H1 (cell line): ENCODE measurements at regions of chr12 and their contacts with region 1.

Region 1: GRCh38 chr12:51341259-51342007 is 5.0 kb downstream of the CELA1 start:
- DNase-seq: peak in 1 of 2 experiments; percentile 79
- H3K4me3 ChIP-seq: peak overlapping the region in 1 of 4 experiments; percentile 37; a peak in 2 of 8 replicates
- H3K27ac ChIP-seq: no peak overlapping the region
- H3K4me1 ChIP-seq: peaks cover 0 to 3% (median 2%) of the 10 kb centered on the region in 4 experiments; a peak in 3 of 7 replicates
- H3K27me3 ChIP-seq: no peaks in the 10 kb centered on the region
- CTCF ChIP-seq: peak; percentile 58 to 99 (median 88)
- EP300 ChIP-seq: no peak
- POLR2A ChIP-seq: no peak
- RAD21 ChIP-seq: peak; percentile 98

Region 2: GRCh38 chr12:51253276-51253675 is 88.2 kb before region 1 on chr12:
- CTCF ChIA-PET with region 1: interaction called, 28 read pairs
- POLR2A ChIA-PET with region 1: interaction called, 5 read pairs
- DNase-seq: no peak
- H3K4me3 ChIP-seq: no peak overlapping the region
- H3K27ac ChIP-seq: no peak overlapping the region
- H3K4me1 ChIP-seq: peaks cover 0 to 5% (median 0%) of the 10 kb centered on the region in 4 experiments; a peak in 1 of 7 replicates
- H3K27me3 ChIP-seq: no peaks in the 10 kb centered on the region
- CTCF ChIP-seq: no peak
- EP300 ChIP-seq: no peak
- POLR2A ChIP-seq: no peak
- RAD21 ChIP-seq: no peak

Region 3: GRCh38 chr12:51270067-51270970 is 71.1 kb before region 1 on chr12 and contains the start of gene SMAGP:
- CTCF ChIA-PET with region 1: interaction called, 111 read pairs
- POLR2A ChIA-PET with region 1: interaction called, 10 read pairs
- DNase-seq: peak in 1 of 2 experiments; percentile 89
- H3K4me3 ChIP-seq: peak within 1 kb of the TSS; percentile 42 to 84 (median 62)
- H3K27ac ChIP-seq: no peak within 1 kb of the TSS; the same call in 1 of the 2 replicates
- H3K4me1 ChIP-seq: peaks cover 0 to 6% (median 2%) of the 10 kb centered on the region in 4 experiments; a peak in 5 of 7 replicates
- H3K27me3 ChIP-seq: peaks cover 0 to 11% (median 8%) of the 10 kb centered on the region in 4 experiments; a peak in 6 of 7 replicates
- CTCF ChIP-seq: no peak
- EP300 ChIP-seq: 0 out of 3 replicates have a peak, but pooled peaks of 1 of the 2 experiments have one; percentile 13
- POLR2A ChIP-seq: peak; percentile 43 to 63
- RAD21 ChIP-seq: no peak; a peak in 2 of 4 replicates
- total RNA-seq, gene SMAGP: 9.2 and 9.4 TPM in 2 replicates

Region 4: DNA sequence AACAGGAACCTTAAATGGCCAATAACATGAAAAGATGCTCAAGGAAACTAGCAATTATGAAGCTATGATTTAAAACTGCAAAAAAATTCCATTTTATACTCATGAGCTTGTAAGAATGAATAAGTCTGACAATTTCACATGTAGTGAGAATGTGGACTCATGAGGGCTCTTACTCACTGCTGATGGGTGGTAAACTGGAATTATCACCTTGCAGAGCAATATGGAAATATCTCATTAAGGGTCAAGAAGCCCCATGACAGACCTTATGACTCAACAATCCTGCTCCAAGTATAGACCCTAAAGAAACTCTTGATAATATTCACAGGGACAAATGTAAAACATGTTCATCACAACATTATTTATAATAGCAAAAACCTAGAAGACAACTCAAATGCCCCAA is 47.7 kb before region 1 on chr12:
- CTCF ChIA-PET with region 1: interaction called, 33 read pairs
- POLR2A ChIA-PET with region 1: interaction called, 3 read pairs
- DNase-seq: no peak
- H3K4me3 ChIP-seq: no peak overlapping the region
- H3K27ac ChIP-seq: no peak overlapping the region
- H3K4me1 ChIP-seq: no peaks in the 10 kb centered on the region
- H3K27me3 ChIP-seq: no peaks in the 10 kb centered on the region
- CTCF ChIP-seq: no peak
- EP300 ChIP-seq: no peak
- POLR2A ChIP-seq: no peak
- RAD21 ChIP-seq: no peak

Region 5: DNA sequence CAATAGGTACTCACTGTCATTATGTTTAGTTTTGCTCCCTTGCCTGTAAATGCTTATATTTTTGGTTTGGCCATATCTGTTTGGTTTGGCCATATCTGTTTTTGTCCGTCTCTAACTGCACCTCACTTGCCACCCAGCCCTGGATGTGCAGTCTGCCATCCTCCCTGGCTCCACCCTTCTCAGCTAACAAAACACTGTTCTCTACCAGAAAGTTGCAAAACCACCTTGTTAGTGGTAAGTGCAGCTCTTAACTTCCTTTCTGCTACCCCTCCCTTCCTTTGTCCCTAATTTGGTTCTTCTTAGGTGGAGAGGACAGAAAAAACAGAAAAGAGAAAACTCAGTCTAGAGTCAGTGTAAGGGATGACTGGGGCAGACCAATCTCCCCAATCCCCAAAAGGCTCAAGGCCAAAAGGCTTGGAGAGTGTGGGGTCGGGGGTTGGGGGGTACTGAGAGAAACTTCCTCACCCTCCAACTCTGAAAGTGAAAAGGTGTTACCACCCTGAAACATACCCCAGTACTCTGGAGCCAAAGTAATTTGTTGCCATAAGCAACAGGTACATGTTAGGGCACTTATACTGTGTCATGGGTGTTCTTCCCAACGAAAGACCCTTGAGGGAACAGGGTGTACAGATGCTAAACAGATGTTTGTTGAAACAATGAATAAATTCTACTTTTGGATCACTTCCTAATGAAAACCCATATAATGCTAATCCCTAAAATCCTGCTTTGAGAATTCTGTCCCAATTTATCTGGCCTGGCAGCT is 22.4 kb before region 1 on chr12:
- CTCF ChIA-PET with region 1: interaction called, 45 read pairs
- POLR2A ChIA-PET with region 1: interaction called, 8 read pairs
- DNase-seq: no peak
- H3K4me3 ChIP-seq: no peak overlapping the region
- H3K27ac ChIP-seq: no peak overlapping the region
- H3K4me1 ChIP-seq: peaks cover 2 to 16% (median 7%) of the 10 kb centered on the region in 4 experiments; a peak in 6 of 7 replicates
- H3K27me3 ChIP-seq: no peaks in the 10 kb centered on the region; a peak in 1 of 7 replicates
- CTCF ChIP-seq: no peak
- EP300 ChIP-seq: no peak
- POLR2A ChIP-seq: no peak
- RAD21 ChIP-seq: no peak

Region 6: GRCh38 chr12:51351913-51352532 is 10.6 kb after region 1 on chr12:
- CTCF ChIA-PET with region 1: interaction called, 119 read pairs
- POLR2A ChIA-PET with region 1: interaction called, 7 read pairs
- DNase-seq: peak; percentile 59 to 90
- H3K4me3 ChIP-seq: no peak overlapping the region
- H3K27ac ChIP-seq: no peak overlapping the region
- H3K4me1 ChIP-seq: peaks cover 0 to 4% (median 1%) of the 10 kb centered on the region in 4 experiments; a peak in 1 of 7 replicates
- H3K27me3 ChIP-seq: no peaks in the 10 kb centered on the region
- CTCF ChIP-seq: peak; percentile 67 to 92 (median 79)
- EP300 ChIP-seq: no peak
- POLR2A ChIP-seq: no peak
- RAD21 ChIP-seq: peak; percentile 93 to 96